Right ventricle myocardium superior (tissue), 1 donor: ENCODE measurements at regions of chr17 and their contacts with region 1.

Region 1: DNA sequence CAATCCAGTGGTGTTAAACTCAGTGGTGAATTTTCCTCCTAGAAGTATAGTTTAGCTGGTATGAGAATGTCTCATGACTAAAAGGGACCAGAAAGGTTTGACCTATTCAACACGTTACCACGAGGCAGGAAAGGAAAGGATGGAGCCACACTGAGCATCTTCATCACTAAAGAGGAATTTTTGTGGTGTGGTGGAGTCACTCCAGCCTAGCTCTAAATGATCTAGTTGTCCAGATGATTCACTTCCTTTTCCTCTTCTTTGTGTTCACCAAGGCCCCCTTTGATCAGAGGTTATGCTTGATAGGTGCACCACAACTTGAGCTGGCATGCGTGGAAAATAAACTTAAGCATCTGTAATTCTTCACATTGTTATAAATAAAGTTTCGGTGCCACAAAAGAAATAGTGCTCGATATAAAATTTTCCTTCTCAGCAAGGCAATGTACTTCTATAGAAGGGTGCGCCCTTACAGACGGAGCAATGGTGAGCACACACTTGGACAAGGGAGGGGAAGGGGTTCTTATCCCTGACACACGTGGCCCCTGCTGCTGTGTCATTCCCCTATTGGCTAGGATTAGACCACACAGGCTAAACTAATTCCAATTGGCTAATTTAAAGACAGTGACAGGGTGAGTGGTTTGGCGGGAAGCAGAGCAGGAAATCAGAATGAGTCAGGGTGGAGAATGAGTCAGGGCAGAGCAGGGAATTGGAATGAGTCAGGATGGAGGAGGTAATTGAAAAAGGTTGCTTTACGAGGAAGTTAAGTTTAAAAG is 254.5 kb downstream of the HS3ST3A1 start:
- DNase-seq: no peak
- ATAC-seq: no peak

Region 2: DNA sequence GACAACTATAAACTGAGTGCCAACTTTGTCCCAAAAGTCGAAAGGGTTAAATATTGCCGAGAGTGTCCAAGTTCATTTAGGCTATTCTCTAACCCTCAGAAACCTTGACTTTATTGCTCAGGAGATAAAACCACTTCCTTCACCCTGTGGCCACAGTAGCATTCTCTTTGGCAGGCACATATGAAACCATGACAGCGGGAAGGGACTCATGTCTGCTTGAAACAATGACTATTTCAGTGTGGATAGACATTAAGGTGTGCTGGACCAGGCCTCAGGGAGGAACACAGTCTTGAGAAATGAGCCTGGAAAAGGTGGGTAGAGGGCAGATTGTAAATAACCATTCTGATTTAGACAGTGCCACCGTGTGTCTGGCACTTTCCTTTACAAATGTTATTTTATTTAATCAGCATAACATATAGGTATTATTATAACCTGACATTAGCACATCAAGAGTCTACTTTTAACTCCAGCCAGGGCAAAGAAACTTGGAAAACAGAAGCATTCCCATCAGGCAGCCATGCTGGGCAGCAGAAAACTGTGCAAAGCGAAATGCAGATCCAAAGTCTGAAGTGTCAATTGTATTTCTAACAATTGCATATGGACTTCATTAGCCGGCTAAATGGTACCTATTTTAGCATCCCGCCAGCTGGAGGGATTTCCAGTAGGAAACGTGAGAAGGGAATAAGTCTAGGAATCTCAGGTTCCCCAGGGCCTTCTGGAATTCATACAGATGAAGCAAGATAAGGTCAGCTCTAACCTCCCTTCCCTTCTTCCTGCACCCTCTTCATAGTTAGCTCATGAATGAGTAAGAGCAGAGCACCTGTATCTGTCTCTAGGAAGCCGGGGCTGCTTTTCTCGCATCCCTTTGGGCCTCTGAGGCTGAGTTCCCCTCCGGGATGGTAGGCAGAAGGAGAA is 116.6 kb before region 1 on chr17:
- intact Hi-C with region 1: no loop called
- DNase-seq: no peak
- ATAC-seq: no peak

Region 3: GRCh38 chr17:13576661-13577526 is 229.7 kb after region 1 on chr17:
- intact Hi-C with region 1: loop called (anchors 10 kb)
- DNase-seq: no peak
- ATAC-seq: no peak